Activated naive CD4-positive, alpha-beta T cell treated with anti-CD3 and anti-CD28 coated beads, Interleukin-2, amount 10 ng/mL, durations not matched to agents 7 days and 5 days (primary cell): ENCODE measurements at regions of chr13 and their contacts with region 1.

Region 1: GRCh38 chr13:53260594-53260993 is 232.0 kb downstream of the OLFM4 start:
- DNase-seq: no peak
- H3K4me3 Mint-ChIP-seq: no peak overlapping the region
- H3K27ac Mint-ChIP-seq: no peak overlapping the region
- H3K4me1 Mint-ChIP-seq: no peaks in the 10 kb centered on the region
- H3K27me3 Mint-ChIP-seq: no peaks in the 10 kb centered on the region

Region 2: DNA sequence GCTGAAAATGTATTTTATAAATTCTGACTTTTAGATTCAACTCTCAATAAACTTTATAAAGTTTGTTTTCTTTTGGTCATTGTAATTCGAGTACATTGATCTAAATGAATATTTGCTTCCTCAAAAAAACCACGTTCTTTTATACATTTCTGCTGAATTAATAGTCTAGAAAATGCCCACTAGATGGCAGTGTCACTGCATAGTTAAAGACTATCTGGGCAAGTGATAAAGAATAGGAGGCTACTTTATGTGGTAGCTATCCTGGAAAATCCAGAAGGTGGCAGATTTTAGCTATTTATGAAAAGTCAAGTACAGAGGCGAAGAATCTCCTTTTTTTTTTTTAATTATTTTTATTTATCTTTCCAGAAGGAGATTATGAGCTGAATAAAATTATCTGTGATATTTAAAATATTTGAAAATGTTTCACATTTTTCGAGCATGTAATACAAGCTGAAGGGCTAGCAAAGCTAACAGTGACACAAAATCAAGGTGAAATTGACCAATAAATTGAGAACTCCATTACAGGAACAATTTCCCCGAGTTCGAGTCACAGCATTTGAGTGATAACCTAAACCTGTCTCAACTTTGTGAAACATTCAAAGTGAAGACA is 10.2 kb before region 1 on chr13:
- CTCF ChIA-PET with region 1: interaction called, 12 read pairs
- DNase-seq: peak; percentile 24
- H3K4me3 Mint-ChIP-seq: no peak overlapping the region
- H3K27ac Mint-ChIP-seq: no peak overlapping the region
- H3K4me1 Mint-ChIP-seq: no peaks in the 10 kb centered on the region
- H3K27me3 Mint-ChIP-seq: no peaks in the 10 kb centered on the region